Heart left ventricle (tissue), 16 donors: ENCODE measurements at regions of chr3 and their contacts with region 1.

Region 1: GRCh38 chr3:98901392-98902350 is at the start of gene DCBLD2:
- DNase-seq: peak; percentile 98 to 99 (median 99)
- ATAC-seq: peak; percentile 99
- H3K4me3 ChIP-seq: peak within 1 kb of the TSS; percentile 78 to 99 (median 93)
- H3K27ac ChIP-seq: peak within 1 kb of the TSS; percentile 72 to 97 (median 96)
- H3K4me1 ChIP-seq: peaks cover 0 to 46% (median 19%) of the 10 kb centered on the region in 12 donors
- H3K27me3 ChIP-seq: no peaks in the 10 kb centered on the region
- CTCF ChIP-seq: no peak
- POLR2A ChIP-seq: peak; percentile 79 to 95
- total RNA-seq, gene DCBLD2: 28.3 to 76.6 (median 62.0) TPM

Region 2: GRCh38 chr3:98522244-98523090 is 379.2 kb before region 1 on chr3 and contains the start of gene CLDND1:
- intact Hi-C with region 1: loop called in 1 of 10 experiments (anchors 5 kb)
- DNase-seq: peak; percentile 98 to 99 (median 98)
- ATAC-seq: peak; percentile 99 to 100 (median 100)
- H3K4me3 ChIP-seq: peak within 1 kb of the TSS; percentile 60 to 94 (median 74)
- H3K27ac ChIP-seq: peak within 1 kb of the TSS; percentile 92 to 98 (median 95)
- H3K4me1 ChIP-seq: peaks cover 0 to 30% (median 20%) of the 10 kb centered on the region in 12 donors
- H3K27me3 ChIP-seq: no peaks in the 10 kb centered on the region
- CTCF ChIP-seq: no peak
- POLR2A ChIP-seq: peak in 1 of 2 donors; percentile 91
- total RNA-seq, gene CLDND1: 64.2 to 155 (median 77.0) TPM

Region 3: GRCh38 chr3:98885851-98886250 is 15.8 kb before region 1 on chr3:
- intact Hi-C with region 1: loop called in 1 of 10 experiments (anchors 1 kb)
- DNase-seq: no peak
- ATAC-seq: no peak
- H3K4me3 ChIP-seq: no peak overlapping the region
- H3K27ac ChIP-seq: peak overlapping the region in 7 of 12 donors; percentile 6 to 62 (median 51)
- H3K4me1 ChIP-seq: peaks cover 0 to 72% (median 48%) of the 10 kb centered on the region in 12 donors
- H3K27me3 ChIP-seq: no peaks in the 10 kb centered on the region
- CTCF ChIP-seq: no peak
- POLR2A ChIP-seq: no peak

Region 4: DNA sequence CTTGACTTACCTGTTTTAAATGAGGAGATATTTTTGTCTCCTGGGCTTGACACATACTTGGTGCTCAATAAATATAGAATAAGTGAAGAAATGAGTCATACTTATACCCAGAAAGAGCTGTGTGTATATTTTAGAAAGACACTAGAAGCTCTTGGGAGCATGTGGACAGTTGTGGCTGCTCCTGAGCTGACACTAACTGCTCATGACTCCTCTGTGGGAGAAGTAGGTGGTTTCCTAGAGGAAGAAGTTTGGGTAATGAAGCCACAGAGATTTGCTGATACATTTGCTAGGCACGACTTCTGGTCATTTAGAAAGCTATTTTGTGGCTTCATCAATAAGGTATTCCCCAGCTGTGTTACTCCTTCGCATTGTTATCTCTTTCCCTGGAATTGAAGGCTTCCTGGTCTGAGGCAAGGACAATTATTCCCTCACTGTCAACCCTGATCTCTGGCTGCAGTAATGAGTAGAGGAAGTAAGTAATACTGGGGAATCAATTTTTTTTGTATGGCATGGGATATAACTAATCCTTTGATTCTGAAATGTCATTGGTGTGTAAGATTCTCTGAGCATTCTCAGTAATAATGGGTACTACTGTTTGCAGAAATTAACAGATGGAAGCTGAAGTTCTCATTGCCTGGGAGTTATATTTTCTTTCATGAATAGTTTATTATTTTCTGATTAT is 79.4 kb after region 1 on chr3:
- intact Hi-C with region 1: loop called in 3 of 10 experiments (anchors 10 kb)
- DNase-seq: no peak
- ATAC-seq: no peak
- H3K4me3 ChIP-seq: no peak overlapping the region
- H3K27ac ChIP-seq: no peak overlapping the region
- H3K4me1 ChIP-seq: peaks cover 0 to 19% (median 0%) of the 10 kb centered on the region in 12 donors
- H3K27me3 ChIP-seq: no peaks in the 10 kb centered on the region
- CTCF ChIP-seq: no peak
- POLR2A ChIP-seq: no peak

Region 5: GRCh38 chr3:98994128-98994762 is 92.6 kb after region 1 on chr3:
- intact Hi-C with region 1: loop called in 4 of 10 experiments (anchors 10 kb)
- DNase-seq: no peak
- ATAC-seq: peak in 2 of 4 donors; percentile 29 to 48
- H3K4me3 ChIP-seq: no peak overlapping the region
- H3K27ac ChIP-seq: no peak overlapping the region
- H3K4me1 ChIP-seq: no peaks in the 10 kb centered on the region
- H3K27me3 ChIP-seq: no peaks in the 10 kb centered on the region
- CTCF ChIP-seq: peak; percentile 45 to 81 (median 72)
- POLR2A ChIP-seq: no peak